Activated CD4-positive, alpha-beta memory T cell treated with anti-CD3 and anti-CD28 coated beads for 36 hours (primary cell): ENCODE measurements at regions of chr6 and their contacts with region 1.

Region 1: DNA sequence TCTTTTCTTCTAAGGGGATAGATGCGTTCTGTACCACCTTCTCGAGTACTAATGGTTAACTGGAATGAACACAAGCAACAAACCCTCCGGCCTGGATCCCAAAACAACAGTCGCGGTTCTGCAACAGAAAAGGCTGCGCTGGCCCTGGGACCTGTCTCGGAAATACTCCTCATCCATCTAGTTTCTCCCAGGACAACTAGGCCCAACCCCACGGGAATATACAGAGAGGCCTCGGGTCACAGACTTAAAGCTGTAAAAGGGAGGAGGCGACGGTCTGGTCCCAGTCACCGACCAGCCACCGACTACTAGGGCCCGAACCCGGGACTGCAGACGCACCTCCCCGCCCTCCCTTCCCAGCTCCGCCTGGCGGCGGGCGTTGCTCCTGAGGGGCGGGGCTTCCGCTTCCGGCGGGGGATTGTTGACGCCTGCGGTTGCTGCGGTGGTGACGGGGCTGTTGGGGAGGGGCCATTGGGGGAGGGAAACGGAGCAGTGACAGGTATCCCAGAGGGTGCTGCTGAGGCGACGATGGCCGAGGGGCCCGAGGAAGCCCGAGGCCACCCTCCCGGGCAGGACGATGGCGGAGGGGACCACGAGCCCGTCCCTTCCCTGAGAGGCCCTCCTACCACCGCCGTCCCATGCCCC is at the start of gene FAM8A1:
- DNase-seq: peak; percentile 98
- H3K4me3 Mint-ChIP-seq: peak within 1 kb of the TSS; percentile 81
- H3K27ac Mint-ChIP-seq: peak within 1 kb of the TSS; percentile 64
- H3K4me1 Mint-ChIP-seq: peaks cover 37% of the 10 kb centered on the region
- H3K27me3 Mint-ChIP-seq: no peaks in the 10 kb centered on the region
- total RNA-seq, gene FAM8A1: 5.0 to 5.1 TPM

Region 2: DNA sequence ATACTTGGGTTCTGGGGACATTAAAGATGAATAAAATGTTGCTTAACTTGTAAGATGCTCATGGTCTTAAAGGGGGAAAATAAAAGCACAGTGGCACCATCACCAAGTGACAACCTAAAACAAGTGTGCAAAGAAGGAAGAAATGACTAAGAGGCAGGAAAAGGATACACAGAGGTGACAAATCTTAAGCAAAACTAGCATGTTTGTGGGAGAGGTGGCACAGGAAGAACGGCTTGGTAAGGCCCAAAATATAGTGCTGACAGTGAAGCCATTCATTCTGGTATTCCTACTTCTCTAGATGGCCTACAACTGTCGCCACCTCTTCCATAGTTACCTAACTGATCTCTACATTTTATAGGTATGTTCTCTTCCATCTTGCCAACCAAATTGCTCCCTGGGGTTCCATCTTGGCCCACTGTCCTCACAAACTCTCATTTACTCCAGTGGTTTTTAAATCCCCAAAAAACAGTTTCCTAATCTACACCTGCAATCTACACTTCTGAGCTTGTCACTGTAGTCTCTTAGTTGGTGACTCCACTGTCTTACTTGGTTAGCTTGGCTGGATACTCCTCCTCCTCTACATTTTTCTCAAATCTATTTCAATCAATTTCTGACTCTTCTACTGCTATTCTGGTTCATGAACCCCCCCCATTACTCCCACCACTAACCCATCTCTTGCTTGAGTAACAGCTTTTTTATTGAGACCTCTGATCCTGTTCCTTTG is 33.6 kb after region 1 on chr6:
- CTCF ChIA-PET with region 1: interaction called, 3 read pairs
- POLR2A ChIA-PET with region 1: interaction called, 4 read pairs
- intact Hi-C with region 1: loop called (anchors 1 kb)
- DNase-seq: peak; percentile 52
- H3K4me3 Mint-ChIP-seq: peak overlapping the region; percentile 1
- H3K27ac Mint-ChIP-seq: peak overlapping the region; percentile 75
- H3K4me1 Mint-ChIP-seq: peaks cover 48% of the 10 kb centered on the region
- H3K27me3 Mint-ChIP-seq: no peaks in the 10 kb centered on the region

Region 3: DNA sequence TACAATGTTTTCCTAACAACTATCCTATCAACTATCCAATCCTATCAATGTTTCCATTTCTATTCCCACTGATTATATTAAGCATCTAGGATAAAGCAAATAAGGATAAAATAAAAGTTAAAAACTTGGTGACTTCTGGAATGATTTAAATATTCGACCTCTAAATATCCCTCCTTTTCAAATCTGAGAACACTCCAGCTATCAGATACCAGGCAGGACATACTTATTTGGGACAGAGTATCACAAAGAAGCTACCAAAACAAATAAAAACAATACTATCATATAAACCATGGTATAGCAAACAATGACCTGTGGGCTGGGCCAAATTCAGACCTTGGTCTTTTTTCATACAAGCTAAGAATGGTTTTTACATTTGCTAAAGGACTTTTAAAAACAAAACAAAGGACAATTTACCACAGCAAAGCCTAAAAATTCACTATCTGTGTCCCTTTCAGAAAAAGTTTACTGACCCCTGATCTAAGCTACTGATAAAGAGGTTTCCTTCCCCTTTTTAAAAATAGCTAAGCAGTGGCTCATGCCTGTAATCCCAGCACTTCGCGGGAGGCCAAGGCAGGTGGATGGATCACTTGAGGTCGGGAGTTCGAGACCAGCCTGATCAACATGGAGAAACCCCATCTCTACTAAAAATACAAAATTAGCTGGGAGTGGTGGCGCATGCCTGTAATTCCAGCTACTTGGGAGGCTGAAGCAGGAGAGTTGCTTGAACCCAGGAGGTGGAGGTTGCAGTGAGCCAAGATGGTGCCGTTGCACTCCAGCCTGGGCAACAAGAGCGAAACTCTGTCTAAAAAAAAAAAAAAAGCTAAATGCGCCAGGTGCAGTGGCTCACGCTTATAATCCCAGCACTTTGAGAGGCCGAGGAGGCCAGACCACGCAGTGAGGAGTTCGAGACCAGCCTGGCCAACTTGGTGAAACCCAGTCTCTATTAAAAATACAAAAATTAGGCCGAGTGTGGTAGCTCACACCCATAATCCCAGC is 100.7 kb after region 1 on chr6:
- CTCF ChIA-PET with region 1: interaction called, 11 read pairs
- POLR2A ChIA-PET with region 1: interaction called, 29 read pairs
- intact Hi-C with region 1: no loop called
- DNase-seq: no peak
- H3K4me3 Mint-ChIP-seq: no peak overlapping the region
- H3K27ac Mint-ChIP-seq: peak overlapping the region; percentile 72
- H3K4me1 Mint-ChIP-seq: peaks cover 47% of the 10 kb centered on the region
- H3K27me3 Mint-ChIP-seq: no peaks in the 10 kb centered on the region

Region 4: GRCh38 chr6:17820055-17820454 is 220.0 kb after region 1 on chr6:
- CTCF ChIA-PET with region 1: interaction called, 3 read pairs
- POLR2A ChIA-PET with region 1: no interaction called
- intact Hi-C with region 1: loop called (anchors 5 kb)
- DNase-seq: no peak
- H3K4me3 Mint-ChIP-seq: no peak overlapping the region
- H3K27ac Mint-ChIP-seq: no peak overlapping the region
- H3K4me1 Mint-ChIP-seq: no peaks in the 10 kb centered on the region
- H3K27me3 Mint-ChIP-seq: peaks cover 2% of the 10 kb centered on the region

Region 5: GRCh38 chr6:18070486-18070885 is 470.5 kb after region 1 on chr6:
- CTCF ChIA-PET with region 1: no interaction called
- POLR2A ChIA-PET with region 1: no interaction called
- intact Hi-C with region 1: no loop called
- DNase-seq: no peak
- H3K4me3 Mint-ChIP-seq: no peak overlapping the region
- H3K27ac Mint-ChIP-seq: no peak overlapping the region
- H3K4me1 Mint-ChIP-seq: no peaks in the 10 kb centered on the region
- H3K27me3 Mint-ChIP-seq: peaks cover 6% of the 10 kb centered on the region

Region 6: GRCh38 chr6:18155150-18155863 is 555.3 kb after region 1 on chr6 and contains the start of gene KDM1B:
- CTCF ChIA-PET with region 1: no interaction called
- POLR2A ChIA-PET with region 1: no interaction called
- intact Hi-C with region 1: loop called (anchors 1 kb)
- DNase-seq: peak; percentile 99
- H3K4me3 Mint-ChIP-seq: peak within 1 kb of the TSS; percentile 97
- H3K27ac Mint-ChIP-seq: peak within 1 kb of the TSS; percentile 87
- H3K4me1 Mint-ChIP-seq: peaks cover 24% of the 10 kb centered on the region
- H3K27me3 Mint-ChIP-seq: no peaks in the 10 kb centered on the region
- total RNA-seq, gene KDM1B: 17.5 to 18.5 TPM